Spleen (tissue), 13 donors: ENCODE measurements at regions of chr10 and their contacts with region 1.

Region 1: DNA sequence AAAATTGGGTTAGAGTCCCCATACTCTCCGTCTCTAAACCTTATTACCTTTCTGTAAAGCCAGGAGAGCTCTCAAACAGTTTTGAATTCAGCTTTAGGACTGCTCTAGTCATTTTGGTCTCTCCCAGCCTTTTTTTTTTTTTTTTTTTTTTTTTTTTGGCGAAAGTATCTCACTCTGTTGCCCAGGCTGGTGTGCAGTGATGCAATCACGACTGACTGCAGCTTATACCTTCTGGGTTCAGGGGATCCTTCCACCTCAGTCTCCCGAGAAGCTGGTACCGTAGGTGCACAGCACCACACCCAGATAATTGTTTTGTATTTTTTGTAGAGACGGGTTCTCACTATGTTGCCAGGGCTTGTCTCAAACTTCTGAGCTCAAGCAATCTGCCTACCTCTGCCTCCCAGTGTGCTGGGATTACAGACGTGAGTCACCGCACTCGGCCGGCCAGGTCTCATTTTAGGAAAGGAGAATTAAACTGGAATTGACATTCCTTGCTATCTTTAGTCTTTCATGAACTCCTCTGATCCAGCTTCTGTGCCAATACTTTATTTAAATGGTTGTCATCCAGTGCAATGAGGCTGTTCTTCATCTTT is 31.4 kb upstream of the RSU1 start:
- DNase-seq: no peak
- H3K4me3 ChIP-seq: no peak overlapping the region
- H3K27ac ChIP-seq: no peak overlapping the region
- H3K4me1 ChIP-seq: peaks cover 0 to 2% (median 0%) of the 10 kb centered on the region in 6 donors
- H3K27me3 ChIP-seq: no peaks in the 10 kb centered on the region
- CTCF ChIP-seq: no peak
- POLR2A ChIP-seq: no peak

Region 2: DNA sequence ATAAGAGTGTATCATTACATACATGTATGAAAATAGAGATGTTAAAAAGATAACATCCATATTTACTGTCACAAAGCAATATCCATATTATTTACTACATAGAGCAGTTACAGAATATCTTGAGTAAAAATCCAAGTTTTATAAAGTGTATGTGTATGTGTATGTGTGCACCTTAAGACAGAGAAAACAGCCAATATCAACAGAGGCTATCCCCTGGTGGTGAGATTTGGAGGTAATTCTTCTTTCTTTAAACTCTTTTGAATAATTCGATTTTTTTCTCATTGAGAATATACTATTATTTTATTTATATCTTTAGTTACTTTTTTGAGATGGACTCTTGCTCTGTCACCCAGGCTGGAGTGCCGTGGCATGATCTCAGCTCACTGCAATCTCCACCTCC is 334.5 kb after region 1 on chr10:
- intact Hi-C with region 1: no loop called
- DNase-seq: no peak
- H3K4me3 ChIP-seq: no peak overlapping the region
- H3K27ac ChIP-seq: peak overlapping the region in 6 of 8 donors; percentile 40 to 68 (median 52)
- H3K4me1 ChIP-seq: peaks cover 0 to 4% (median 0%) of the 10 kb centered on the region in 6 donors
- H3K27me3 ChIP-seq: no peaks in the 10 kb centered on the region
- CTCF ChIP-seq: peak in 1 of 11 experiments; percentile 21
- POLR2A ChIP-seq: no peak

Region 3: DNA sequence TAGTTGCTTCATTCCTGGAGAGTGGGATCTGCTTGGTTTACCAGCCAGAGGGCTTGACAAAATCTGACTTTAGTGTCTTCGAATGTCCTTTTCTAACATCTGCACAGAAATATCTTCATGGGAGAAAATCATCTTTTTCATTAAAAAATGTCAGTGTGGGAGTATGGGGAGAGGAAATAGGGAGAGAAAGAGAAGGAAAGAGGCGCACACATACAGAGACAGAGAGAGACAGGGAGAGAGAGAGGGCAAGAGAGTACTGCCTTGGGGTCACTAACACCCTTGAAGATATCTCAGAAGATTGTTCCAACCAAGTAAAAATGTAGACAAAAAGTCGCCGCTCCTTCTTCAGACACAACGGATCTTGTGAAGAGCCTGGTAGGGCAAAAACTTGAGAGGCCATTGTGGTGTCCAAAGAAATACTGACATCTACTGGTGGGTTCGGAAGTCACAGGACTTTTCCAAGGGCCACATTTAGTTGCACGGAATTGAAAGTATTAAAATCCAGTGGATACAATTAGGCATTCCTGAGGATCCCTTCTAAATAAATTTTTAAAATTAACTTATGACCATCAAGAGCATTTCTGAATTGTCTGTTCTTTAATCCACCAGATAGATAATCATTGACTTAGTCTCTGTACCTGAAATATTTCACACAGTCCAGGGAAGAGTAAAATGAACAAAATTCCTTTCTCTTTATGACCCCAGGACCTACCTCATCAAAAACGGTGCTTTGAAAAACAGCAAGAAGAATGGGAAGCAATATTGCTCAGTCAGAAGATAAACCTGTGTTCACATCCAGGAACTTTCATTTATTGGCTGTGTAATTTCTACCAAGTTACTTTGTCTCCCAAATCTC is 409.0 kb after region 1 on chr10:
- intact Hi-C with region 1: loop called (anchors 5 kb)
- DNase-seq: no peak
- H3K4me3 ChIP-seq: peak overlapping the region in 2 of 8 donors; percentile 11 to 25
- H3K27ac ChIP-seq: peak overlapping the region in 2 of 8 donors; percentile 17 to 29
- H3K4me1 ChIP-seq: peaks cover 0 to 16% (median 6%) of the 10 kb centered on the region in 6 donors
- H3K27me3 ChIP-seq: no peaks in the 10 kb centered on the region
- CTCF ChIP-seq: peak; percentile 69 to 89 (median 83)
- POLR2A ChIP-seq: no peak

Region 4: DNA sequence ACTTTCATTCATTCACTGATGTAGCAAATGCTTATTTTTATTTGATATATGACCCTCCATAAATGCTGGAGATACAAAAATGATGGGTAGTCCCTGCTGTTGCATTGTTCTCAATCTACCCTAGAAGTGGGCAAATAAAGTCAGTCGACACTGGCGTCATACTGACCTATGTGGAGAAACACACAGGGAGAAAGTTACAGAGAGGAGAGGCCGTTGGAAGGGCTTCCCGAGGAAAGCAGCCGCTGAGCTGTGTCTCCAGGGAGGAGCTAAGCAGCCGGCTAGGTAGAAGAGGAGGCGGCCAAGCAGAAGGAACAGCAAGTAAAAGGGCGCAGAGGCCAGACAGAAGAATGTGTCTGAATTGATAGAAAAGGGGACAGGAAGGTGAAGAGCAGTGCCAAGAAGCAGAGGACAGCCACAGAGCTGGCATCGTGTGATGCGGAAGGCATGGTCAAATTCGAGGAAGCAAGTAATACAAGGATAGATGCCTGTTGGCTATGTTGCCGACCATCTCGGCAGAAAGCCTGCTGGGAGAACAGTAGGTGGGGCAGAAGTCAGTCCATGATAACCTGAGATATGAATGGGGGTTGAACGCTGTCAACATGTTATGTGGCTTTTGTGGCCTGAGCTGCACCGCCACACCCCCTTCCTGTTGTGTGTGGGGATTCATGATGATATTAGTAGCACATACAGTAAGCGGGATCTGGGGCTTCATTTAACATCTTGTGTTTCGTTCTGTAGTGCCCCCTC is 579.9 kb after region 1 on chr10:
- intact Hi-C with region 1: loop called (anchors 5 kb)
- DNase-seq: peak; percentile 77
- H3K4me3 ChIP-seq: peak overlapping the region in 4 of 8 donors; percentile 11 to 51 (median 14)
- H3K27ac ChIP-seq: peak overlapping the region in 6 of 8 donors; percentile 10 to 67 (median 42)
- H3K4me1 ChIP-seq: peaks cover 7 to 69% (median 35%) of the 10 kb centered on the region in 6 donors
- H3K27me3 ChIP-seq: peaks cover 0 to 35% (median under 1%) of the 10 kb centered on the region in 7 donors
- CTCF ChIP-seq: no peak
- POLR2A ChIP-seq: no peak